AG04449 (cell line): ENCODE measurements at regions of chr15 and their contacts with region 1.

Region 1: GRCh38 chr15:40274350-40275274 is 8.3 kb downstream of the ANKRD63 start:
- DNase-seq: peak; percentile 16
- H3K4me3 ChIP-seq: no peak overlapping the region
- CTCF ChIP-seq: peak; percentile 100

Region 2: DNA sequence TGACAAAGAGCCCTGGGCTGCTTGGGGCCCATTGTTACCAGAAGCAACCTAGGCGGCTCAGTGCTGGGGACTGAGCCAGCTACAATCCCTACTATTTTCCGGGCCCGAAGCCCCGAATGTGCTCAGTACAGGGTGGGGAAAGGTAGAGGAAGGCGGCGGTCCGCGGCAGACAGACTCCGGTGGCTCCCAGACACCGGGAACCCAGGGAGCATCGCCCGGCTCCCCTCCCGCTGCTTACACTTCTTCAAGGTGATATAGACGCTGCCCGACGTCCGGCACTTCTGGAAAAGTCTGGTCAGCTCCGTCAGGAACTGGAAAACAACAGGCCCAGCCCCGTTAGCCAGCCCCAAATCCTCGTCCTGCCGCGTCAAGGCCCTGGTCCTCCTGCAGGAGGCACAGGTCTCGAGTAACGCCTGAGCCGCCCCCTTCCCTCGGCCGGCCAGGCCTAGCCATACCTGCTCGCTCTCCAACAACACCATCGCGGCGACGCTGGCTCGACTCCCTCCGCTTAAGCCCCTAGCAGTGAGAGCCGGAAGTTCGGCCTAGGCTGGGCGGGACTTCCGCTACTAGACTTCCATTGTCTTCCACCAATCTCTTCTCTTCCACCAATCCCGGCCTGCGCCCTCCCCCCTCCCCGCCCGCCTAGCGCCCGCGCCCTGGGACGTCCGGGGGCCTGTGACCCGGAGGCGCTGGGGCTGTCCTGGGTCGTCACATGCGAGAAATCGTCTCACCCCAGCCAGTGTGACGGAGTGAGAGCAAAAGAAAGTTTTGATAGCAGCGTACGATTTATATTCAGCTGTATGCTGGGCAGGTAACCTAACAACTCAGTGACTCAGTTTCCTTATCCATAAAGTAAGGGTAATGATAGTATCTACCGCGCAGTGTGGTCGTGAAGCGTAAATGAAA is 235.7 kb before region 1 on chr15 and contains the start of gene SRP14:
- CTCF ChIA-PET with region 1: interaction called, 286 read pairs
- POLR2A ChIA-PET with region 1: no interaction called
- DNase-seq: no peak
- H3K4me3 ChIP-seq: peak within 1 kb of the TSS; percentile 95
- CTCF ChIP-seq: no peak

Region 3: GRCh38 chr15:40160689-40161688 is 113.6 kb before region 1 on chr15 and contains the start of gene BUB1B:
- CTCF ChIA-PET with region 1: interaction called, 14 read pairs
- POLR2A ChIA-PET with region 1: no interaction called
- DNase-seq: peak; percentile 28
- H3K4me3 ChIP-seq: peak within 1 kb of the TSS; percentile 94
- CTCF ChIP-seq: no peak

Region 4: DNA sequence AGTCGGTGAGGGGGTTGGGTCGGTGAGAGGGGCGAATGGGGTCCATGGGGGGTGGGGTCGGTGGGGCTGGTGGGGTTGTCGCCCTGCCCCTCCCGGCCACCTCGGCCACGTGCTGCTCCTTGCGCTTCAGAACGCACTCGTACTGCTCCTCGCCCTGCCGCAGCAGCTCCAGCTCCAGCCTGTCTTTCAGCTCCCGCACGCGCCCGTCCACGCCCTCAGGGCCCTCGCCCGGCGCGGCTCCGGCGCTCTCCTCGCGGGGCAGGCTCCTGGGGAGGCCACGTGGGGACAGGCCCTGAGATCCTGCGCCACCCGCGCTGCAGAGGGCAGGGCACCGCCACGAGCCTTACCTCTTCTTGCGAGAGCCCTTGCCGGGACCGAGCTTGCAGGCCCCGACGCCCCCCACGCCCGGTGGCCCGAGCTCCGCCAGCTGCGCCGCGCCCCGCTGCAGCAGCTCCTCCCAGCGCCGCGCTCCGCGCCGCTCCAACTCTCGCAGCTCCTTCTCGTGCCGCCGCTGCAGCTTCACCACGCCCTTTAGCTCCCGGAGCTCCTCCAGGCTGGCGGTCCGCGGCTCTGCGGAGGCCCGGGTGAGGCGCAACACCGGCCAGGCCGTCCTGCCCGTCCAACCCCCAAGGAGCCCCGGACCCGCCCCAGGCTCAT is 16.4 kb after region 1 on chr15:
- CTCF ChIA-PET with region 1: interaction called, 211 read pairs
- POLR2A ChIA-PET with region 1: no interaction called
- DNase-seq: no peak
- H3K4me3 ChIP-seq: peak overlapping the region; percentile 45
- CTCF ChIP-seq: no peak

Region 5: DNA sequence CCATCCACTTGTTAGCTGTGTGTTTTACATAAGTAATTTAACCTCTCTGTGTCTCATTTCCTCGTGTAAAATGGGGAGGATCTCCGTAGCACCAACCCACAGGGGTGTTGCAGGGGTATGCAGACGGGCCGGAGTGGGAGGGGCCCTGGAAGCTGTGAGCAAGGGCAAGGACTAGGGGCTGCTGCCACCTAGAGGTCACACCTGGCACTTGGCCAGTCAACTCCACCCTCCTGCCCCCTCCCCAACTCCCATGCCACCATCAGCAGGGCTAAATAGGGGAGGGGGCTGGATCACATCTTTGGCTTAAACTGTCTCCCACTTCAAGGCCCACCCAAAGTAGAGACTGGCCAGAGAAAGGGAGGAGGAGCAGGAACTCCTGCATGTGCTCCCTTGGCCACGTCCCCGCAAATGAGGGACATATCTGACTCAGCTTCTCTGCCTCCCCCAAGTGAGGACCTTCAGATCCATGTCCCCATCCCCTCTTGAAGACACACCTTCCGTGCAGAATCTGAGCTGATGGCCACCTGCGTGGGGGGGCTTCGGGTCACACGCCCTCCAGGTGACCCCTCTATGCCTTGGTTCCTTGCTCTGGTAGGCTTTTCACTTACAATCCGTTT is 63.5 kb after region 1 on chr15:
- CTCF ChIA-PET with region 1: interaction called, 113 read pairs
- POLR2A ChIA-PET with region 1: no interaction called
- DNase-seq: no peak
- H3K4me3 ChIP-seq: peak overlapping the region; percentile 48
- CTCF ChIP-seq: peak; percentile 84

Region 6: GRCh38 chr15:40421246-40422157 is 146.9 kb after region 1 on chr15:
- CTCF ChIA-PET with region 1: interaction called, 97 read pairs
- POLR2A ChIA-PET with region 1: no interaction called
- DNase-seq: no peak
- H3K4me3 ChIP-seq: no peak overlapping the region; the same call in 1 of the 2 replicates
- CTCF ChIP-seq: peak; percentile 97

Region 7: DNA sequence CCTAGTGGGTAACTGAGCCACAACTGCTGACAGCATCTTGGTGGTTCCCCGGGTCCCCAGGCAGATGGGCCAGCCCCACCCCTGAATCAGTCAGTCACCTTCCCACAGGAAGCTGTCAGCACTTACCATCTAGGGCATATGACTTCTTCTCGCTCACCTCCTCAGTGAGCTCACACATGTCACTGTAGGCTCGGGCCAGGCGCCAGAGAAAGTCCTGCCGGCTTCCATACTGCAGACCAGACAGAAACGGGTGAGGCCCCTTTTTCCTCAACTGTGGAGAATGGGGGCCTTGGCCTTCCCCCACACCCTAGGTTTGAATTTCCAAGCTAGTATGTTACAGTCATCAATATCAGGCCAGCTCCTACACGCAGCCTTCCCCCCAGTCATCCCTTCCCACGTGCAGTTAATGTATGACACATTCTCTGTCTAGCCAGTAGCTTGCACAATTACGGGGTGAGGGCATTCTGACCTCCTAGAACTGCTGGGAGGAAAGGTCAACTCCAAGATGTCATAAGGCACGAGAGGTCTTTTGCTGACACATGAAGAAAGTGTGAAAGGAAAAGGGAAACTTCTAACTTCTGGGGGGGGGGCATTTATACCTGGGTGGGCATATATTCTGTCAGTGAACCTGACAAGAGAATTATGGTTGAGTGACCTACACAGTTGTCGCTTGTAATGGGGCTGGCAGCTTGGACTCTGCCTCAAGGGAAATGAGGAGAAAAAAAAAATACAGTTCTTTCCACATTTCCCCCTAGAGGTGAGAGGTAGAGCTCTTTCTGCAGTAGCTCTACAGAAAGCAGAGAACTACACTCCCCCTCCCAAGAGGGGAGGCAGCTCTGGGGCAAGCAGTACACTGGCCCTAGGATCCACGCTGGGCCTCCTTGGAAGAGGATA is 469.6 kb after region 1 on chr15:
- CTCF ChIA-PET with region 1: no interaction called
- POLR2A ChIA-PET with region 1: no interaction called
- DNase-seq: no peak
- H3K4me3 ChIP-seq: no peak overlapping the region
- CTCF ChIP-seq: no peak

Region 8: DNA sequence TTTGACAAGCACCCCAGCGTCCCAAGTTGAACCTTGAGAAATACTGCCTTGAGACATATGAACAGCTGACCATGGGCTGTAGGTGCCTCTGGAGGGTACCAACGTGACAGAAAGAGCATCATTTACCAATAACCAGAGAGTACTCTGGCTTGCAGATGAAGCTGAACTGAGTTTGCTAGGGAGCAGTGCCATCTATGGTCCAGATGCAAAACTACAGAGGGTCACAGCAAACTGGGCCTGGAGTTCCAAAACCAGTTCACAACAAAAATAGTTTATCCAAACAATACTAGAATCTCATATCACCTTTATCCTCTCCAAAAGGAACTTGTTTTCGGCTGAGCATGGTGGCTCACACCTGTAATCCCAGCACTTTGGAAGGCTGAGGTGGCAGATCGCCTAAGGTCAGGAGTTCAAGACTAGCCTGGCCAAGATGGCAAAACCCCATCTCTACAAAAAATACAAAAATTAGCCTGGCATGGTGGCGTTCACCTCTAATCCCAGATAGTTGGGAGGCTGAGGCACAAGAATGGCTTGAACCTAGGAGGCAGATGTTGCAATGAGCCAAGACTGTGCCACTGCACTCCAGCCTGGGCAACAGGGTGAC is 748.0 kb after region 1 on chr15:
- CTCF ChIA-PET with region 1: no interaction called
- POLR2A ChIA-PET with region 1: no interaction called
- DNase-seq: peak; percentile 16
- H3K4me3 ChIP-seq: no peak overlapping the region
- CTCF ChIP-seq: peak; percentile 77